ENCODE measurements at regions of chr2 and their contacts with region 1.

Region 1: DNA sequence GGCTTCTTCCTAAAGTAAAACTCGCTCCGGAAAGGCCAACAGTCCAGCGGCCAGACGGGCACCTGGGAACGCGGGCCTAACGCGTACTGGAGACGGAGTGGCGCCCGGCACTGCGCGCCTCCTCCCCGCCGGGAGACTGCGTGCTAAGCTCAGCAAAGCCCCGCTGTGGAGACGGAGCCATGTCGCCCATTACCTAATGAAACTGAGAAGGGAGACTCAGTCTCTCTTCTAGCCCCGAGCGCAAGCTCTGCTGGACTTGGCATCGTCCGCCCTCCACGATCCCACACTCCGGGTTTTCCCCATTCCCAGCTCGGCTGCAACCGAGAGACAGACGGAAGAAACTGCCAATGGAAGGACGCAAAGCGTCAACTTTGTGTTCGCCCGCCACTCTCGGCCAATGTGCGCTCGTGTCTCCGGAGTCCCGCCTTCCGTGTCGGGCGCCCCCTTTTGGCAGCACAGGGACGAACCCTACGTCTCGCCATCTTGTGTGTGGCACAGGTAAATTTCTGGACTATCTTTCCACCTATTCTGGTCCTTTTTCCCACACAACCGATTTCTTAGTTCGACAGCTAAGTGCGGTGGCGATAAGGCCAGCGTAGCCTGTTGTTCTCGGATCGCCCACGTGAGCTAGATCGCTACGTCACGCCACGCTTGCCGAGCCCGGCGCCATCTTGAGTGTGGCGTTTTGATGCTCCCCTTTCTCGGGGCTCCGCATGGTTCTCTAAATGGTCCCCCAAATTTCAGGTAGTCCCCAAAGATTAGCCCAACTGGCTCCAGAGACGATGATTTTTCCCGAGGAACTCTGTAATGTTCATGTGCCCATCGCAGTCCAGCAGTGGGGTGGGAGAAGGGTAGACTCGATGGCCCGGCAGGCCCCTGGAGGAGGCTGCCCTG is 1.3 kb upstream of the PTMA start:
- DNase-seq: peak; percentile 99
- ATAC-seq: peak; percentile 65 to 82 (median 75)
- H3K4me3 ChIP-seq: peak overlapping the region; percentile 58 to 99 (median 94)
- H3K27ac ChIP-seq: peak overlapping the region; percentile 94 to 100 (median 99)
- H3K4me1 ChIP-seq: peaks cover 4 to 45% (median 28%) of the 10 kb centered on the region in 12 donors
- H3K27me3 ChIP-seq: no peaks in the 10 kb centered on the region
- CTCF ChIP-seq: peak; percentile 73 to 98 (median 93)
- POLR2A ChIP-seq: peak in 1 of 2 donors; percentile 68

Region 2: DNA sequence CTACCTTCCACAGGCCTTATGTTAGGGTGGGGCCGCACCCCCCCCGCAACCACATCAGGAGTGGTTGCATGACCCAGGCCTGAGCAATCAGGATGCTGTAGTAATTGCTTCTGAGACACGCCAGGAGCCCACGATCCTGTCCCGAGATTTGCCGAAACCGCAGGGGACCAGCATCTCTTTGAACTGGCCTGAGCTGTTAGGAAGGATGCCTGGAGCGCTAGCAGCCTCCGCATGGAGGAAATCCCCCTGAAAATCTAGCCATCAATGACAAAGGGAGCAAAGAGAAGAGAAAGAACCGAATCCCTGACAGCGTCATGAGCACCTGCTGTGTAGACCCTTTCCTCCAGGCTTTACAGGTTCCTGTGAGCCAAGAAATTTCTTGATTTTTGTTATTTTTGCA is 123.0 kb before region 1 on chr2:
- intact Hi-C with region 1: no loop called
- DNase-seq: peak in 1 of 5 donors; percentile 15
- ATAC-seq: peak in 1 of 4 donors; percentile 41
- H3K4me3 ChIP-seq: no peak overlapping the region
- H3K27ac ChIP-seq: peak overlapping the region in 1 of 12 donors; percentile 34
- H3K4me1 ChIP-seq: no peaks in the 10 kb centered on the region
- H3K27me3 ChIP-seq: no peaks in the 10 kb centered on the region
- CTCF ChIP-seq: no peak
- POLR2A ChIP-seq: no peak

Region 3: DNA sequence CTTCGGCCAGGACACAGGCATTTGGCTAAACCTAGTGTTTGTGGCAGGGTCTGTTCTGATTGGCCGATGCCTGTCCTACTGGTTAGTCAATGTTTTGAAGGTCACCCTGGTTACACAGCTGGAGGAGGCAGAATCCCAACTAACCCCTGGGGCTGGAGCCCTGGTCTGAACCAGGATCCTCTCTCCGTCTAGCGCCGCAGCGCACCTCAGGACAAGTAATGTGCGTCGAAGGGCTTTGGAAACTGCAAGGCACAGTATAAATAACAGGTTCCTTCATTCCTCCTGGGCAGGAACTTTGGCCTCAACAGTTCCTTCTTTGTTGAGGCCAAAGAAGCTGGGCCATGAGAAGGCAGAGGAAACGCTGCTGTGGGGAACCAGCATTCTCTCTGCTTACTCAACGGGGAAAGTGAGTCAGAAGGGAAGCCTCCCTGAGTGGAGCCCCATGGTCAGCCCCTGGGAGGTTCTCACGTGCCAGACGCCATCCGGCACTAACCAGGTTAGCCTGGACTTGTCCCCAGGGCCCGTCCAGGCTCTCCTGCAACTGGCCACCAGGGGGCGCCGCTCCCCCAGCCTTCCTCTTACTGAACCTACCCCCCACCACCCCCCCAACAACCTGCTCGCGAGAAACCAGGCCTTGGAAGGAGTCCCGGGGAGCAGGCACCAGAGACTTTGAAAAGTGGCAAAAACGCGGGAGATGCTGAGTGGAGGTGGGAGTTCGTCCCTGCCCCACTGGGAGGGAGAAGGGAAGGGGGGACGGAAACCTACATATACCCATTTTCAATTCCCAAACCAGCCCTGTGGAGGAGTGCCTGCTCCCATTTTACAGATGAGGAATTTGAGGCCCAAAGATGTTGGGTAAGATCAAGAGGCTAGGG is 94.6 kb before region 1 on chr2:
- intact Hi-C with region 1: loop called in 3 of 10 experiments (anchors 1 kb)
- DNase-seq: peak; percentile 91 to 95 (median 92)
- ATAC-seq: peak; percentile 65 to 79 (median 72)
- H3K4me3 ChIP-seq: peak overlapping the region in 1 of 12 donors; percentile 14
- H3K27ac ChIP-seq: peak overlapping the region; percentile 91 to 100 (median 98)
- H3K4me1 ChIP-seq: peaks cover 16 to 54% (median 35%) of the 10 kb centered on the region in 12 donors
- H3K27me3 ChIP-seq: peaks cover 0 to 8% (median 0%) of the 10 kb centered on the region in 9 donors
- CTCF ChIP-seq: peak; percentile 93 to 99 (median 98)
- POLR2A ChIP-seq: no peak

Region 4: DNA sequence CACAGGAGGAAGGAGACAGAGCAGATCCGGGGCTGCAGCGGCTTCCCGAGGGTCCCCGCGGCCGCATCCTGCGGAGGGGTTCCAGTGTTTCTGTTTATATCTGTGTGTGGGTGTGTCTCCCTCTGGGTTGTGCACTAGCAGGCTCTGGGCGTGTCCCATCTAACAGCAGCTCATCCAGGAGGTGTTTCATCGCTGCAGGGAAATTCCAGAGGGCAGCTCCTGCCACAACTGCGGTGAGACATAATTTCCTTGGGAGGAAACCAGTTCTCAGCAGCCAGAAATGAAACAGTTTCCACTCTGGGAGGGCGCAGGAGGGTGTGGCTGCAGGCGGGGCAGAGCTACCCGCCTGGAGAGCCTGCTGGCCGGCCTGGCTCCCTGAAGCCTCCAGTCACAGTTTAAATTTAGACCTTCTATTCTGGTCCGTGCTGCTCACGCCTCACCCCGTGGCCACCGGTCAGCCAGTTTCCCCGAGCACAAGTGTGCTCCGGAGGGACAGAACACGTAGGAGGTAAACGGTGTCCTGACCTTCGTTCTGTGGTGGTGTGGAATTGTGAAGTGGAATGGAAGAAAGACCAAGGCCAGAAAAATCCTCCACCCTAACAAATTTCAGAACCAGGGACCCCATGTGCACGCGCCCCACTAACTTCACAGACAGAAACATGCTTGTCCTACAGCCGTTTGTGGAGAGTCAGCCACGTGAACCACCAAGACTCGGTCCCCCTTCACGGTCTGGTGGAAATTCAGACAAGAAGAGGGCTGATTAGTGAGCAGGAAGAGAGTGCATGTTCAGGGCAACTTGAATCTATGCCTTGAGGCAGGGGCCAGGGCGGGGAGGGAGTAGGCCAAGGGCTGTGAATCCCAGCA is 64.1 kb before region 1 on chr2:
- intact Hi-C with region 1: loop called in 1 of 10 experiments (anchors 1 kb)
- DNase-seq: peak; percentile 89 to 94 (median 92)
- ATAC-seq: peak; percentile 92 to 97 (median 96)
- H3K4me3 ChIP-seq: peak overlapping the region in 9 of 12 donors; percentile 2 to 53 (median 39)
- H3K27ac ChIP-seq: peak overlapping the region; percentile 83 to 100 (median 94)
- H3K4me1 ChIP-seq: peaks cover 9 to 71% (median 48%) of the 10 kb centered on the region in 12 donors
- H3K27me3 ChIP-seq: no peaks in the 10 kb centered on the region
- CTCF ChIP-seq: peak in 3 of 12 donors; percentile 4 to 16 (median 10)
- POLR2A ChIP-seq: peak; percentile 5 to 71

Region 5: DNA sequence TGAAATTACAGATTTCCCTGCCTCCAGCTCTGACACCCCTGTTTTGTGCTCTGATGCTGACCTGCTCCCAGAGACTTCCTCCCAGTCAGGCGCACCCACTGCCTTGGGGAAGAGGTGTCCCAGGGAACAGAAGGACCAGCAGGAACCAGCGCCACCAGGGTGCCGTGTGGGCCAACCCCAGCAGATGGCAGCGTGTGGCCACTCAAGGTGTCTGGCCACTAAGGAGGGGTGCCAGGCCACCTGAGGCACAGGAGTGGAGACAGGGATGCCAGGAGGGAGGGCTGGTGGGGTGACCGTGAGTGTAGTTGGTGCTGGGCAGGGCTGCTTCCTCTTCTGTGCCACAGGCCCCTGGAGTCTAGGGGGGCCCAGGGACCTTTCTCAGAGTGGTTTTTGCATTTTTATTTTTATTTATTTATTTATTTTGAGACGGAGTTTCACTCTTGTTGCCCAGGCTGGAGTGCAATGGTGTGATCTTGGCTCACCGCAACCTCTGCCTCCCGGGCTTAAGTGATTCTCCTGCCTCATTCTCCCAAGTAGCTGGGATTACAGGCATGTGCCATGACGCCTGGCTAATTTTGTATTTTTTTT is 58.3 kb before region 1 on chr2:
- intact Hi-C with region 1: loop called in 1 of 10 experiments (anchors 1 kb)
- DNase-seq: peak; percentile 70 to 88 (median 74)
- ATAC-seq: peak; percentile 67 to 82 (median 79)
- H3K4me3 ChIP-seq: no peak overlapping the region
- H3K27ac ChIP-seq: peak overlapping the region in 1 of 12 donors; percentile 33
- H3K4me1 ChIP-seq: peaks cover 1 to 38% (median 16%) of the 10 kb centered on the region in 12 donors
- H3K27me3 ChIP-seq: no peaks in the 10 kb centered on the region
- CTCF ChIP-seq: peak; percentile 51 to 79 (median 65)
- POLR2A ChIP-seq: no peak

Region 6: GRCh38 chr2:231662028-231662810 is 44.8 kb before region 1 on chr2:
- intact Hi-C with region 1: loop called in 4 of 10 experiments (anchors 1 to 5 kb)
- DNase-seq: peak; percentile 95 to 99 (median 97)
- ATAC-seq: peak; percentile 56 to 80 (median 72)
- H3K4me3 ChIP-seq: peak overlapping the region in 11 of 12 donors; percentile 19 to 65 (median 49)
- H3K27ac ChIP-seq: peak overlapping the region; percentile 93 to 100 (median 96)
- H3K4me1 ChIP-seq: peaks cover 0 to 41% (median 27%) of the 10 kb centered on the region in 12 donors
- H3K27me3 ChIP-seq: no peaks in the 10 kb centered on the region
- CTCF ChIP-seq: peak in 1 of 12 donors; percentile 5
- POLR2A ChIP-seq: peak; percentile 58 to 71

Region 7: DNA sequence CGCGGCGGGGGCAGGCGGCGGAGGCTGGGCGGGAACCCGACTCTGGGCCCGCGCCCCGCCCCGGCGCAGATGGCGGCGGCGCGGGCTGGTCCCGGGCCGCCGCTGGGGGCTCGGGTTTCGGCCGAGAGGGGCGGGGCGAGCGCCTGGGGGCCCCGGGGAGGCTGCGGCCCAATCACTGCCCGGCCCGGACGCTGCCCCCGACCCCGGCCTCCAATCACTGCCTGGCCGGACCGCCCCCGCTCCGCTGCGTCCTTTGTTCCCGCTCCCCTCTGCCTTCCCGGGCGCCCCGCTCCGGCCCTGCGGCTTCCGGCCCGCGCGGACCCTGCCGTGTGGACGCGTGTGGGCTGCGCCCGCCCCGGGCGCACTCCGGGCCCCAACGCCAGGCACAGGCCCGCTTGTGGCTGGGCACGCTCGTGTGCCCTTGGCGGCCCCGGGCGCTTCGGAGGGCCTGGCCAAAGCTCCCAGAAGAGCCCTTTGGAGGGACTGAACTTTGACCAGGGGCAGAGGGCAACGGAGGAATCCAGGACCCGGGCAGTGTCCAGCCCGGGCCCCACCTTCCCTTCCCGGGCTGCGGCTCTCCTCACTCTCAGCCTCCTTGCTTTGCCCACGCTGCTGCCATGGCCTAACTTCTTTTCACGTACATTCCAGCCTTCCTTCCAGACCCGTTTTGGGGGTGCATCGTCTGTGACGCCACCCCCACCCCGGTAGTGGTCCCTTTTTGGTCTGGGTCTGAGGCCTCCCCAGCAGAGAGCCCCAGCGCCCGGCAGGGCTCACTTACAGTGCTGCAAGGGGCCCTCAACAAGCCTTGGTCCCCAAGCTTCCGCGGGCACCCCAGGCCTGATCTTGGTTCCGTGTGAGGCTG is 25.8 kb before region 1 on chr2:
- intact Hi-C with region 1: loop called in 2 of 10 experiments (anchors 1 to 2 kb)
- DNase-seq: peak; percentile 92 to 94 (median 93)
- ATAC-seq: peak; percentile 80 to 93 (median 90)
- H3K4me3 ChIP-seq: peak overlapping the region; percentile 28 to 89 (median 59)
- H3K27ac ChIP-seq: peak overlapping the region; percentile 85 to 98 (median 95)
- H3K4me1 ChIP-seq: peaks cover 0 to 44% (median 10%) of the 10 kb centered on the region in 12 donors
- H3K27me3 ChIP-seq: no peaks in the 10 kb centered on the region
- CTCF ChIP-seq: no peak
- POLR2A ChIP-seq: peak in 1 of 2 donors; percentile 74

Region 8: DNA sequence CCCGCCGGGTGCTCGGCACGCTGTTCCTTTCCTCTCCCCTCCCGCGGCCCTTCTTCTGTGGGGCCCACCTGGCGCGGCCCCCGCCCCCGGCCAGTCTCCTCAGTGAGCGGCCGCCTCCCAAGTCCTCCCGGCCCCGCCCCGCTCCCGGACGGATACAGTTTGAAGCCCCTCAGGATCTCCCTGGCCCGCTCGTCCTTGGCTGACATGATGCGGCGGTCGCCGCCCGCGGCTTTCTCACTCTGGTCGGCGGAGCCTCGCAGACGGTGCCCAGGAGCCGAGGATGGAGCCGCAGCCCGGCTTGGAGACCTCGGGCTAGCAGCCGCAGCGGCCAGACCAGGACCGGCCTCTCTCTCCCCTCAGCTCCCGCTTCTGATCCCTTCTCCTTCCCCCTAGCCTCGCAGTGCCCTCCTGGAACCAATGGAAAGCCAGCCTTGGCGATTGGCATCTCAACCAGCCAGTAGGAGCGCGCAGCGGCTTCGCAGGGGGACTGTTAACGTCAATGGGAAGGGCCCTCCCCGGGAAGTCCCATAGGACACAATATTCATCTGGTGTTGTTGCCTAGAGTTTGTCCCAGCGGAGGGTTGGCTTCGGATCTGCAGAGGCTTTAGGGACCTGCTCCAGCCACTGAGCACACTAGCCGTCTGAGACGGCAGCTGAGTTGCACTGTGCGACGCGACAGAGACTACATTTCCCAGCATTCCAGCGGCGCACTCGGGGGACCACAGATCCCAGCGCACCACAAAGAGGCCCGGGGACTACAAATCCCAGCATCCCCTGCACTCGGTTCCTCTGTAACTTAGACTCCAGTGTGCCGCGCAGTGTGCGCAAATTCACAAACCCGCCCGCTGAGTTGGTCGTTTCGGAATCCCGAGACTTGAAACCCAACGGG is 74.2 kb after region 1 on chr2 and contains the start of gene PDE6D:
- intact Hi-C with region 1: loop called in 1 of 10 experiments (anchors 5 kb)
- DNase-seq: peak; percentile 98 to 100 (median 99)
- ATAC-seq: peak; percentile 95 to 97 (median 96)
- H3K4me3 ChIP-seq: peak within 1 kb of the TSS; percentile 59 to 95 (median 87)
- H3K27ac ChIP-seq: peak within 1 kb of the TSS; percentile 54 to 93 (median 90)
- H3K4me1 ChIP-seq: peaks cover 0 to 53% (median 30%) of the 10 kb centered on the region in 12 donors
- H3K27me3 ChIP-seq: no peaks in the 10 kb centered on the region
- CTCF ChIP-seq: no peak
- POLR2A ChIP-seq: peak; percentile 96 to 99
- total RNA-seq, gene PDE6D: 12.3 to 29.1 (median 19.5) TPM

Measured in heart left ventricle (tissue), 16 donors.